Lower leg skin (tissue), 4 donors: ENCODE measurements at regions of chr1 and their contacts with region 1.

Region 1: DNA sequence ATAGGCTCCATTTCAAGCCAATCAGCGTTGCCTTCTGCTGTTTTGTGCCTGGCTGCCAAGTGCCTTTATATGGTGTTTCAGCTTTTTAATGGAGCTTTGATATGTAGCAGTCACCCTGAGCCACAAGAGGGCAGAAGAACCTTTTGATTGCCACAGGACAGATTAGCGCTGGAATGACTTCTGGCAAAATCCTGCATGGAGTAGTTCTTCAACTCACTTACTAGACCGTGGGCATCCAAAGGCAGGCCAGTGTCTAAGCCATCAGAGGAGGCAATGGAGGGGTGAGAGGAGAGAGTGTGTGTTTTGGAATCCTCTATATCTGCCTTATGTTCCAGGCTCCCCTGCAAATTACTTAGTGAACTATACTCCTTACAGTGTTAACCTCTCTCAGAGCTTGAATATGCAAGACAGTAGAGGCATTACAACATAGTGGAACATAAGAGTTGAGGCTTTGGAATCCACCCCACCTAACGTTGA is 56.2 kb downstream of the ST3GAL3 start:
- DNase-seq: peak; percentile 83 to 89
- H3K4me3 ChIP-seq: no peak overlapping the region
- CTCF ChIP-seq: peak in 1 of 3 donors; percentile 76
- POLR2A ChIP-seq: no peak

Region 2: DNA sequence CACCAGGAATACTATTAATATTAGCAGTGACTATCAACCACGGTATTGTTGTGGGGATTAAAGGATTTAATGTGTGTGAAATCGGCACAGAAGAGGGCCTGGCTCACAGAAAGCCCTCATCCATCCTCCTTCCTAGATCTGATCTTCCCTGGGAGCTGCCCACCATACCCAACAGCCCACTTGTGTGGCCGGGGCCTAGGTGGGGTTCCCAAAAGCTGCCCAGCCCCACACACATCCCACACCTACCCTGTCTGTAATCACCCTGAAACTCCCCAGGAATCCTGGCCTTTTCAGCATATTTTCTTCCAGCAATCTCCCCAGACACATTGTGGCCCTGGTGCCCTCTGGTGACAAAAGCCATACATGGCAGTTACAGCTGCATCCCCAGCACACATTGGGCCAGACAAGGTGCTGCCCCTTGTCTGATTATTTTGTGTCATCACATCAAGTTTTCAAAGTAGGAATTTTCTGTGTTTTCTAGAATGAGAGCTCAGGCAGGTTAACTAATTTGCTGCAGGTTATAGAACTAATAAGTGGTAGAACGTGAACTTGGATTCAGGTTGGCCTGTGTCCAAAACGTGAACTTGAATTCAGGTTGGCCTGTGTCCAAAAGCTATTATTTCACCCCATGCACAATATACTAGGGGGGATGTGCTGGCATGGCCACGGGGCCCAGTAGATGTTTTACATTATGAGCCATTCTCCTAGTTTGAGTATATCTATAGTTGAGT is 273.0 kb after region 1 on chr1:
- intact Hi-C with region 1: loop called (anchors 5 kb)
- DNase-seq: peak; percentile 57 to 93
- H3K4me3 ChIP-seq: no peak overlapping the region
- CTCF ChIP-seq: peak in 1 of 3 donors; percentile 72
- POLR2A ChIP-seq: no peak